Motor neuron (in vitro differentiated cells): ENCODE measurements at regions of chr21 and their contacts with region 1.

Region 1: DNA sequence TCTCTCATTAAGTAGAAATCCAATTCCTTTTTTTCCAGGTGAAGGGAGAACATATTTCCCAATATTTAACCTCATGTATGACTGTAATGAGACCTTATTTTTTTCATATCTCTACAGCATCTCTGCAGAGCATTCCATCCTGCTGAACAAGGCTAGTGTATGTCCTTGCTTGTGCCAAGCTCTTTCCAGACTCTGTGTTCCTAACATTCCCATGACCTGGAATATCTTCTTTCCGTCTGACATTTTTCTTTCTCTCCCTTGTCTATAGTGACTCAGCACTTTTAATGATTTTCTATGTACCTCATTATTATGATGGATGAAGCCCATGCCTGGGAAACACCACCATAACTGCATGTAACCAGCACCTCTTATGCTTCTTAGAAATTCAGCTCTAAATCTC is 278.3 kb upstream of the NRIP1 start:
- ATAC-seq: peak in 2 of 8 experiments; percentile 25 to 40
- H3K4me3 ChIP-seq: no peak overlapping the region
- H3K27ac ChIP-seq: no peak overlapping the region
- H3K4me1 ChIP-seq: no peaks in the 10 kb centered on the region

Region 2: GRCh38 chr21:15250384-15250783 is 92.7 kb before region 1 on chr21:
- in situ Hi-C with region 1: no loop called
- ATAC-seq: no peak
- H3K4me3 ChIP-seq: no peak overlapping the region
- H3K27ac ChIP-seq: no peak overlapping the region
- H3K4me1 ChIP-seq: peaks cover 0 to 7% of the 10 kb centered on the region in 2 donors

Region 3: DNA sequence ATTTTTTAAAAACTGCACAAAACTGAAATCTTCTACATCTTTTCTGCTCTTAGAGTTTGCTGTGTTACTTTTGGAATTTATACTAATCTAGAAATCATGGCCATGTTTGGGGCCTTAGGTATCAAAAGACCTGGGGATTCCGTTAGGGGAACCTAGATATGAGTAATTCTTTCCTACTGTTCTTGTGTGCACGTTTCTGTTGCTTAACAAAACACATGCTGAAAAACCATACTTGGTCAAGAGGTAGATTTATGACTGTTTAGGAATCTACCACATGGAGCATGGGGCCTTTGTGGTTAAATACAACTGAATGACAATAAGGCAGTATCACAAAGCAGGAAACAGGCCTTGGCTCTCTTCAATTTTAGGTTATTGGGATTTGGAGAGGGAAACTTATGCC is 94.8 kb after region 1 on chr21:
- in situ Hi-C with region 1: loop called in 1 of 9 experiments (anchors 25 kb)
- ATAC-seq: no peak
- H3K4me3 ChIP-seq: no peak overlapping the region
- H3K27ac ChIP-seq: no peak overlapping the region
- H3K4me1 ChIP-seq: peaks cover 8 to 12% of the 10 kb centered on the region in 2 donors

Region 4: GRCh38 chr21:15455819-15456462 is 112.9 kb after region 1 on chr21:
- in situ Hi-C with region 1: no loop called
- ATAC-seq: no peak
- H3K4me3 ChIP-seq: no peak overlapping the region
- H3K27ac ChIP-seq: no peak overlapping the region
- H3K4me1 ChIP-seq: no peaks in the 10 kb centered on the region